Aorta (tissue), 5 donors: ENCODE measurements at regions of chr2 and their contacts with region 1.

Region 1: GRCh38 chr2:27086090-27086723 is 365 bp upstream of the KHK start:
- DNase-seq: peak; percentile 97 to 99
- ATAC-seq: peak; percentile 92
- H3K4me3 ChIP-seq: peak overlapping the region; percentile 21 to 46
- H3K27ac ChIP-seq: peak overlapping the region in 1 of 2 donors; percentile 70
- H3K4me1 ChIP-seq: no peaks in the 10 kb centered on the region
- H3K27me3 ChIP-seq: no peaks in the 10 kb centered on the region

Region 2: GRCh38 chr2:26968001-26968400 is 118.2 kb before region 1 on chr2:
- intact Hi-C with region 1: loop called in 1 of 2 experiments (anchors 5 kb)
- DNase-seq: no peak
- ATAC-seq: no peak
- H3K4me3 ChIP-seq: no peak overlapping the region
- H3K27ac ChIP-seq: no peak overlapping the region
- H3K4me1 ChIP-seq: no peaks in the 10 kb centered on the region
- H3K27me3 ChIP-seq: no peaks in the 10 kb centered on the region

Region 3: GRCh38 chr2:27032495-27033252 is 53.5 kb before region 1 on chr2 and contains the start of gene TMEM214:
- intact Hi-C with region 1: loop called (anchors 5 kb)
- DNase-seq: peak; percentile 94 to 96
- ATAC-seq: peak; percentile 97
- H3K4me3 ChIP-seq: peak within 1 kb of the TSS; percentile 67 to 71
- H3K27ac ChIP-seq: peak within 1 kb of the TSS in 1 of 2 donors; percentile 79
- H3K4me1 ChIP-seq: peaks cover 0 to 3% of the 10 kb centered on the region in 2 donors
- H3K27me3 ChIP-seq: no peaks in the 10 kb centered on the region
- total RNA-seq, gene TMEM214: 96.4 to 106 TPM

Region 4: GRCh38 chr2:27050281-27050995 is 35.8 kb before region 1 on chr2:
- intact Hi-C with region 1: loop called in 1 of 2 experiments (anchors 5 kb)
- DNase-seq: peak; percentile 87 to 95
- ATAC-seq: peak; percentile 94
- H3K4me3 ChIP-seq: peak overlapping the region; percentile 58 to 62
- H3K27ac ChIP-seq: peak overlapping the region in 1 of 2 donors; percentile 49
- H3K4me1 ChIP-seq: no peaks in the 10 kb centered on the region
- H3K27me3 ChIP-seq: no peaks in the 10 kb centered on the region

Region 5: DNA sequence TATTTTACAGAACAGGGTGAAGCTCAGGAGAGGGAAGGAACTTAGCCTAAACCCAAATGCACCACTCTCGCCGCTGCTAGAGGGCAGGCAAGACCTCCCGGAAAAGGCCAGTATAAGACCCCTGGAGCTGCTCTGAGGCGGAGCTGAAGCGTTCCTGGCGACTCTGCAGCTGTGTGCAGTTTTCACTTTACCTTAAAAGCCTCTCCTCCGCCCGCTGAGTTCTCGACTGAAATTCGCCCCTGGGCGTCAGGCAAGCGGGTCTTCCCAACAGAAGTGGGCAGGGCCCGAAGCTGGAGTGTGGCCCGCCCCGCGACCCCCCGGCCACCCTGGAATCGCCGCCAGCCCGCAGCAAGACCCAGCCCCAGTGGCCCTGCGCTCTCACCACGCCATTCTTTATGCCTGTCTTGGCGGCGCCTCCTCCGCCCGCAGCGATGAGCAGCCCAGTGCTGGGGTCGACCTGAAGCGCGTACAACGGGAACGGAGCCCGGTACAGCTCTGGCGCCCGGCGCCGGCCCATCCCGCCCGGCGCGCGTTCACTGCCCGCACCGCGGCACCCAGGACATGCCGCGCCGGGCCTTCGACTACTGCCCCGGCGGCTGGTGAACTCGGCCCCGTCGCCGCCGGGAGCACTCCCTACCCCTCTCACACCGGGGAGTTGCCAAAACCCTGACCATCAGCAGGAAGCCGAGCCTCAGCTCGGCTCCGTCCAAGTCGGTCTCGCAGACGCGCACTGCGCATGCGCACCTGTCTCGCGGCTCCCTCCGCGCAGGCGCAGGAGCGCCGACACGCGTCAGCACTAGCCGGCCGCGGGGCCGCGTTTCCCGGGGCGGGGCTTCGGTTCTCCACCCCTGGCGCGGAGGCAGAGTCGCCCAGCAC is 47.9 kb after region 1 on chr2 and contains the start of gene PREB:
- intact Hi-C with region 1: loop called in 1 of 2 experiments (anchors 5 kb)
- DNase-seq: peak; percentile 98 to 100
- ATAC-seq: peak; percentile 96
- H3K4me3 ChIP-seq: peak within 1 kb of the TSS; percentile 83 to 89
- H3K27ac ChIP-seq: peak within 1 kb of the TSS in 1 of 2 donors; percentile 30
- H3K4me1 ChIP-seq: no peaks in the 10 kb centered on the region
- H3K27me3 ChIP-seq: no peaks in the 10 kb centered on the region
- total RNA-seq, gene PREB: 42.1 to 48.1 TPM